Caco-2 (cell line): ENCODE measurements at regions of chr2 and their contacts with region 1.

Region 1: GRCh38 chr2:237060534-237061312 is 25.0 kb upstream of the COPS8 start:
- DNase-seq: peak; percentile 44 to 55
- H3K4me3 ChIP-seq: no peak overlapping the region
- H3K4me3 Mint-ChIP-seq: no peak overlapping the region
- H3K27ac Mint-ChIP-seq: no peak overlapping the region
- H3K4me1 ChIP-seq: no peaks in the 10 kb centered on the region
- H3K4me1 Mint-ChIP-seq: no peaks in the 10 kb centered on the region
- H3K27me3 ChIP-seq: no peaks in the 10 kb centered on the region
- H3K27me3 Mint-ChIP-seq: no peaks in the 10 kb centered on the region
- CTCF ChIP-seq: peak; percentile 51 to 62

Region 2: DNA sequence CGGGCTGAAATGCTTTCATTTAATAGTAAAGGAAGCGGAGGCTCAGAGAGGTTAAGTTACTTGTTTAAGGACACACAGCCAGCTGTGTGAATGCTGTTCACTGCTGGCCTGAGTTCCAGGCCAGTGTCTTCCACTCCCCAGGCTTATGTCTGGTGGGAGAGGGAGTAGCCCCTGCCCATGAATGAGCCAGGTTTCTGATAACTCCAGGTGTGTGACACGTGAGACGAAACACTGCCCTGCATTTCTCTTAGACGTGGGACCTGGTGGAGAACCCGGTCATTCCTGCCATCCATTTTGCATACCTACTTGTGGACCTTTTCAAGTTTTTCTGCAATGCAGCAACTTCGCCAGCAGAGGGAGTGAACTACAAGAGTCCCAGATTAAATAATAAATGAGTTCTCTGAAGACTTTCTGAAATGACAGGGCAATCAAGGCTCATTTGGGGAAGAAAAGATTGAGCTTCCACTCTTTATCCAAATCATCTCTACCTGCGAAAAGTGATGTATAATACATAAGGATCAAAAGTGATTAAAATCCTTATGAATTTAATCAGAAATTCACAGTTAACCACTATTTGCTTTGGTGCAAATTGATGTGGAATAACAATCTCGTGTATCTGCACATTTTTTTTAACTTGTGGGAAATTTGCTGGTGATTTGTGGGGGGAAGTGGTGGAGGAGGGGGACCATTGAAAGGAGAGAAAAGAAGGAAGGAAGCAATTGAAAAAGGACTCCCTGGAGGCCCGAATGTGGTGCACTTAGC is 717.1 kb before region 1 on chr2:
- CTCF ChIA-PET with region 1: interaction called, 3 read pairs
- POLR2A ChIA-PET with region 1: no interaction called
- intact Hi-C with region 1: loop called (anchors 1 kb)
- DNase-seq: peak; percentile 53 to 67
- H3K4me3 ChIP-seq: no peak overlapping the region
- H3K4me3 Mint-ChIP-seq: no peak overlapping the region
- H3K27ac Mint-ChIP-seq: no peak overlapping the region
- H3K4me1 ChIP-seq: no peaks in the 10 kb centered on the region
- H3K4me1 Mint-ChIP-seq: no peaks in the 10 kb centered on the region
- H3K27me3 ChIP-seq: no peaks in the 10 kb centered on the region
- H3K27me3 Mint-ChIP-seq: peaks cover 6% of the 10 kb centered on the region
- CTCF ChIP-seq: peak; percentile 55 to 73

Region 3: GRCh38 chr2:236352761-236353593 is 707.7 kb before region 1 on chr2:
- CTCF ChIA-PET with region 1: interaction called, 3 read pairs
- POLR2A ChIA-PET with region 1: no interaction called
- intact Hi-C with region 1: loop called (anchors 1 kb)
- DNase-seq: no peak
- H3K4me3 ChIP-seq: no peak overlapping the region
- H3K4me3 Mint-ChIP-seq: no peak overlapping the region
- H3K27ac Mint-ChIP-seq: no peak overlapping the region
- H3K4me1 ChIP-seq: no peaks in the 10 kb centered on the region
- H3K4me1 Mint-ChIP-seq: no peaks in the 10 kb centered on the region
- H3K27me3 ChIP-seq: no peaks in the 10 kb centered on the region
- H3K27me3 Mint-ChIP-seq: peaks cover 5% of the 10 kb centered on the region
- CTCF ChIP-seq: peak; percentile 44 to 64

Region 4: GRCh38 chr2:236512902-236513435 is 547.8 kb before region 1 on chr2:
- CTCF ChIA-PET with region 1: interaction called, 15 read pairs
- POLR2A ChIA-PET with region 1: no interaction called
- intact Hi-C with region 1: loop called (anchors 1 kb)
- DNase-seq: peak; percentile 51 to 53
- H3K4me3 ChIP-seq: no peak overlapping the region
- H3K4me3 Mint-ChIP-seq: no peak overlapping the region
- H3K27ac Mint-ChIP-seq: no peak overlapping the region
- H3K4me1 ChIP-seq: no peaks in the 10 kb centered on the region
- H3K4me1 Mint-ChIP-seq: no peaks in the 10 kb centered on the region
- H3K27me3 ChIP-seq: no peaks in the 10 kb centered on the region
- H3K27me3 Mint-ChIP-seq: no peaks in the 10 kb centered on the region
- CTCF ChIP-seq: peak; percentile 67 to 68

Region 5: GRCh38 chr2:236833501-236834073 is 227.1 kb before region 1 on chr2:
- CTCF ChIA-PET with region 1: no interaction called
- POLR2A ChIA-PET with region 1: no interaction called
- intact Hi-C with region 1: no loop called
- DNase-seq: no peak
- H3K4me3 ChIP-seq: no peak overlapping the region
- H3K4me3 Mint-ChIP-seq: no peak overlapping the region
- H3K27ac Mint-ChIP-seq: no peak overlapping the region
- H3K4me1 ChIP-seq: peaks cover 6% of the 10 kb centered on the region; the same call in 1 of the 2 replicates
- H3K4me1 Mint-ChIP-seq: peaks cover 7% of the 10 kb centered on the region
- H3K27me3 ChIP-seq: no peaks in the 10 kb centered on the region
- H3K27me3 Mint-ChIP-seq: no peaks in the 10 kb centered on the region
- CTCF ChIP-seq: no peak

Region 6: DNA sequence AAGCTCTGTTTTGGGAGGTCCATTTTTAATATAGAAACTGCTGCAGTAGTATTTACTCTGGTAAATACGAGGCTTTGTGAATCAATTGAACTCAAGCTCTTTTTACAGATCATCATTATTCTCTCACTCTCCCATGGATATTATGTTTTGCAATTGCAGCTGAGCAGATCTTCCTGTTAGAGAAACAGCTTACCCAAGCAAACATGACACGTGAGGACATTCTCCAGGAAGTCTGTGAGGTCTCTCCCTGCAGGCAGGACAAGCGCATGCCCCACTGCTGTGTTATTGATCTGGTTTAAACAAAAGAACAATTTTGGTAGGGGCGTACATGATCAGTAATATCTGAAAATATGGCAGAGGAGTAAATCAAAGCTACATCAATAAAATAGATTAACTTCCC is 281.1 kb after region 1 on chr2:
- CTCF ChIA-PET with region 1: no interaction called
- POLR2A ChIA-PET with region 1: no interaction called
- intact Hi-C with region 1: no loop called
- DNase-seq: no peak
- H3K4me3 ChIP-seq: no peak overlapping the region
- H3K4me3 Mint-ChIP-seq: no peak overlapping the region
- H3K27ac Mint-ChIP-seq: no peak overlapping the region
- H3K4me1 ChIP-seq: no peaks in the 10 kb centered on the region
- H3K4me1 Mint-ChIP-seq: no peaks in the 10 kb centered on the region
- H3K27me3 ChIP-seq: no peaks in the 10 kb centered on the region
- H3K27me3 Mint-ChIP-seq: peaks cover 3% of the 10 kb centered on the region
- CTCF ChIP-seq: no peak